Astrocyte of the cerebellum (primary cell): ENCODE measurements at regions of chr3 and their contacts with region 1.

Region 1: GRCh38 chr3:41794748-41795589 is 166.9 kb downstream of the ULK4 start:
- DNase-seq: no peak
- H3K4me3 ChIP-seq: no peak overlapping the region
- CTCF ChIP-seq: no peak

Region 2: GRCh38 chr3:41574900-41575299 is 220.1 kb before region 1 on chr3:
- in situ Hi-C with region 1: no loop called
- DNase-seq: no peak
- H3K4me3 ChIP-seq: no peak overlapping the region
- CTCF ChIP-seq: peak; percentile 15

Region 3: DNA sequence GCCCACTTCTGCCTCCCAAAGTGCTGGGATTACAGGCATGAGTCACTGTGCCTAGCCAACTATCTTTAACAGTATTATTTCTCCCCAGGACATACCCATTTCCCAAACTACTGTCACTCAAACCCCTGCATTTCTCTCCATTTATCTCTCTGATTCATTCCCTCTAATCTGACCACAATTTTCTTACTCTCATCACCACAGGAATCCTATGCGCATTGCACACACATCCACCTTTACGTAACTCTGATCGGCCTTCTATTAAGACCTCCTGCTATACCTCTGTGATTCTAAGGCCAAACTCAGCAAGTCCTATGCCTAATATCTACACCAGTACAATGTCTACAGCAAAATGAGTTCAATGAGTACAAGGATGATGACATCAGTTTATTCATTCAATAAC is 68.1 kb before region 1 on chr3:
- in situ Hi-C with region 1: loop called (anchors 5 kb)
- DNase-seq: no peak
- H3K4me3 ChIP-seq: no peak overlapping the region
- CTCF ChIP-seq: no peak

Region 4: DNA sequence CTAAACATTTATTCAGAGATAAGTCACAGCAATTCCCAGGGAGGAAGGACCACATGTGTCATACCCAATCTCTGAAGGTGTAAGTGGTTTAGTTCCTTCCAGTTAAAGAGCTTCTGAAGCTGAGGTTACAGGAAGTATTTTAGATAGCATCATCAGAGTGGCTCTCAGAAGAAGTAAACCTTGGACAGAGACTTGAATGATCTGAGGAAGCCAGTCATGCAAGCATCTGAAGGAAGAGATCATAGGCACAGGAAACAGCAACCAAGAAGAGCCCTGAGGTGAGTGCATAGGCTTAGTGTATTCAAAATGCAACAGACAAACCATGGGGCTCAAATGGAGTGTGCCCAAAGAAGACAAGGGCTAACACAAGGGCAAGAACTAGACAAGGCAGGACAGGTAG is 43.4 kb before region 1 on chr3:
- in situ Hi-C with region 1: no loop called
- DNase-seq: no peak
- H3K4me3 ChIP-seq: no peak overlapping the region
- CTCF ChIP-seq: no peak